Thyroid gland (tissue), 4 donors: ENCODE measurements at regions of chr12 and their contacts with region 1.

Region 1: DNA sequence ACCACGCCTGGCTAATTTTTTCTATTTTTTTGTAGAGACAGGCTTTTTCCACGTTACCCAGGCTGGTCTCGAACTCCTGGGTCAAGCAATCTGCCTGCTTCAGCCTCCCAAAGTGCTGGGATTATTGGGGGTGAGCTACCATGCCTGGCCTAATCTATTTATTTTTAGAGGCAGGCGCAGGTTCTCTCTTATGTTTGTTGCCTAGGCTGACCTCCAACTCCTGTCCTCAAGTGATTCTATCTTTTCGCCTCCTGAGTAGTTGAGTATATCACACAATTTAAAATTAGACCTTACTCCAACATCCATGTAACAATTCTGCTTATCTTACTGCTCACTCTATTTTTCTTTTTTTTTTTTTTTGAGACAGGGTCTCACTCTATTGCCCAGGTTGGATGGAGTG is 6.8 kb upstream of the ACRBP start:
- DNase-seq: no peak
- H3K4me3 ChIP-seq: no peak overlapping the region
- H3K27ac ChIP-seq: no peak overlapping the region
- H3K4me1 ChIP-seq: no peaks in the 10 kb centered on the region
- H3K27me3 ChIP-seq: no peaks in the 10 kb centered on the region
- CTCF ChIP-seq: no peak
- POLR2A ChIP-seq: no peak

Region 2: GRCh38 chr12:6697584-6698351 is 43.8 kb after region 1 on chr12:
- intact Hi-C with region 1: loop called (anchors 5 kb)
- DNase-seq: peak in 1 of 2 donors; percentile 28
- H3K4me3 ChIP-seq: no peak overlapping the region
- H3K27ac ChIP-seq: no peak overlapping the region
- H3K4me1 ChIP-seq: peaks cover 7 to 16% of the 10 kb centered on the region in 2 donors
- H3K27me3 ChIP-seq: peaks cover 16% of the 10 kb centered on the region
- CTCF ChIP-seq: peak in 2 of 6 experiments; percentile 20 to 23
- POLR2A ChIP-seq: no peak